ENCODE measurements at regions of chr3 and their contacts with region 1.

Region 1: GRCh38 chr3:171566803-171567422 is 106.7 kb upstream of the TNIK start:
- DNase-seq: no peak
- ATAC-seq: peak; percentile 66 to 88 (median 86)
- H3K4me3 ChIP-seq: no peak overlapping the region
- H3K27ac ChIP-seq: no peak overlapping the region
- H3K4me1 ChIP-seq: no peaks in the 10 kb centered on the region
- H3K27me3 ChIP-seq: no peaks in the 10 kb centered on the region
- CTCF ChIP-seq: peak; percentile 48 to 77 (median 60)

Region 2: GRCh38 chr3:170961616-170962400 is 605.1 kb before region 1 on chr3:
- intact Hi-C with region 1: loop called in 2 of 3 experiments (anchors 5 to 10 kb)
- DNase-seq: peak in 1 of 6 donors; percentile 24
- ATAC-seq: peak in 3 of 4 donors; percentile 71 to 73 (median 72)
- H3K4me3 ChIP-seq: no peak overlapping the region
- H3K27ac ChIP-seq: no peak overlapping the region
- H3K4me1 ChIP-seq: no peaks in the 10 kb centered on the region
- H3K27me3 ChIP-seq: no peaks in the 10 kb centered on the region
- CTCF ChIP-seq: peak in 3 of 4 donors; percentile 22 to 54 (median 44)

Region 3: DNA sequence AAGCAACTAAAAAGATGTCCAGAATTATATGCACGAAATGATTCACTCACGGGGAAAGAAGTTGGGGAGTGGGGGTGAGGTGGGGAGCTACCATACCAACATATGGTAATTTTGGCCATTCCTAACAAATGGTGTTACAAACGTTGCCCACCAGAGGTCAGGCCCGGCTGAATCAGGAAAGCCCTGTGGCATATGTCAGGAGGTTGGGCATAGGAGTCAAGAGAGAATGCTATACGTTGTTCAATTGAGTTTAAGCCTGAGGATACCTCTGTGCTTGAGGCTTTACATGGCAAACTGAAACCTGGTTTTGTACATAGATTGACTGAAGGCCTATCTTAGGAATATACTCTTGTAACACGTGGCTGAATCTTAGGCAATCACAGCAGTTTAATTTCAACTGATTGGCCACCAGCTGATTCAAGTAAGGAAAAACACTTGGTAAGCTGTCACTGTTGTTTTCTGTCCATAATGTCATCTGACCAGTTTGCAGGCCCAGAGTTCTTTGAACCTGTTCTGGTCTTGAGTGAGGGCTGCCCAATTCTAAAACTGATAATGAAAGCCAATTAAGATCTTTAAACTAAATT is 517.0 kb before region 1 on chr3:
- intact Hi-C with region 1: loop called in 1 of 3 experiments (anchors 10 kb)
- DNase-seq: peak; percentile 22 to 73 (median 60)
- ATAC-seq: peak; percentile 80 to 97 (median 91)
- H3K4me3 ChIP-seq: no peak overlapping the region
- H3K27ac ChIP-seq: no peak overlapping the region
- H3K4me1 ChIP-seq: peaks cover 0 to 2% (median 0%) of the 10 kb centered on the region in 3 donors
- H3K27me3 ChIP-seq: no peaks in the 10 kb centered on the region
- CTCF ChIP-seq: peak; percentile 22 to 44 (median 38)

Region 4: GRCh38 chr3:171162986-171163723 is 403.8 kb before region 1 on chr3:
- intact Hi-C with region 1: loop called in 1 of 3 experiments (anchors 10 kb)
- DNase-seq: no peak
- ATAC-seq: peak in 2 of 4 donors; percentile 52 to 64
- H3K4me3 ChIP-seq: no peak overlapping the region
- H3K27ac ChIP-seq: no peak overlapping the region
- H3K4me1 ChIP-seq: no peaks in the 10 kb centered on the region
- H3K27me3 ChIP-seq: no peaks in the 10 kb centered on the region
- CTCF ChIP-seq: peak in 3 of 4 donors; percentile 32 to 35 (median 34)

Region 5: DNA sequence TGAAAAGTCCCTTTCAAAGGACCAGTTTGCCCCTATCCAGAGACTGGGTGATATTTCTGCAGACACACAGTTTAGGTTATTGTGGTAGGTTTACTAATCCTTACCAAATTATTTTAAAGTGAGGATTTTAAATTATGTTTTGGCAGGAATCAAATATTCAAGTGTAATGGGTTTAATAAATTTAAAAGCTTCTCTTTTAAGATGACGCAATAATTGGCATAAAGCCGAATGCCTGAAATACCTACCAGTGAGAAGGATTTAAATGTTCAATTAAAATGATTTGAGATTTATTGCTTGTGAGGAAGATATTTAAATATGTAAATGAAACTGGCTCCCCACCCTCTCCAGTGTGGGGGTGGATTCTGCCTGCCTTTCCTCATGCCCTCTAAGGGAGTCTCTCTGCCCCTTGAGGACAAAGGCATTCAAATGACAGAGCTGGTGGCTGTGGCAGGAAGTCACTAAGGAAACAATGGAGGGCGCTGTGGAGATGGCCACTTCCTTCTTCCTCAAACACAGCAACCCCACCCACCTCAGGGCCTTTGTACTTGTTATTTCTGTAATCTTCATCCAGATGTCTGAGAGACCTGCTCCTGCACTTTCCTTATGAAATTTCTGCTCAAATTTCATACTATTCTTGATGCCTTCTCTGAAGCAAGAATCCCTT is 238.4 kb before region 1 on chr3:
- intact Hi-C with region 1: no loop called
- DNase-seq: peak in 1 of 6 donors; percentile 11
- ATAC-seq: peak in 2 of 4 donors; percentile 55 to 58
- H3K4me3 ChIP-seq: no peak overlapping the region
- H3K27ac ChIP-seq: no peak overlapping the region
- H3K4me1 ChIP-seq: peaks cover 0 to 19% (median 9%) of the 10 kb centered on the region in 3 donors
- H3K27me3 ChIP-seq: no peaks in the 10 kb centered on the region
- CTCF ChIP-seq: no peak

Region 6: DNA sequence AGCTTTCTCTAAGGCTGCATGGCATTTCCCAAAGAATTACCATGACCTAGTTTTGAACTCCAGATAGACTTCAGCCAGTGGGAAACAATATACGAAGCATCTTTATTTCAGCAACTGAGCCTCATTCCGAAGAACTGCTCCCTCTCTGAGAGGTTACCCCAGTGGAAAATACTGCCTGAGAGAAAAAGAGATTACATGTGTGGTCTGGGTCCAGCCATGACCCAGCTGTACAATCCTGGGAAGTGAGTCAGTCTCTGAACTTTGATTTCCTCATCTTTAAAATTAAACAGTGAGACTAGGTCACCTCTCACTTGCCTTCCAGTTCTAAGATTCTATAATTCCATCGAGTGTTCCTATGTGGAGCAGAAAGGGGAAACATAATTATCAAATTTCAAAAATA is 149.1 kb before region 1 on chr3:
- intact Hi-C with region 1: no loop called
- DNase-seq: no peak
- ATAC-seq: peak in 3 of 4 donors; percentile 46 to 73 (median 63)
- H3K4me3 ChIP-seq: no peak overlapping the region
- H3K27ac ChIP-seq: no peak overlapping the region
- H3K4me1 ChIP-seq: no peaks in the 10 kb centered on the region
- H3K27me3 ChIP-seq: no peaks in the 10 kb centered on the region
- CTCF ChIP-seq: no peak

Measured in pancreas (tissue), 10 donors.